ENCODE measurements at regions of chr7 and their contacts with region 1.

Region 1: DNA sequence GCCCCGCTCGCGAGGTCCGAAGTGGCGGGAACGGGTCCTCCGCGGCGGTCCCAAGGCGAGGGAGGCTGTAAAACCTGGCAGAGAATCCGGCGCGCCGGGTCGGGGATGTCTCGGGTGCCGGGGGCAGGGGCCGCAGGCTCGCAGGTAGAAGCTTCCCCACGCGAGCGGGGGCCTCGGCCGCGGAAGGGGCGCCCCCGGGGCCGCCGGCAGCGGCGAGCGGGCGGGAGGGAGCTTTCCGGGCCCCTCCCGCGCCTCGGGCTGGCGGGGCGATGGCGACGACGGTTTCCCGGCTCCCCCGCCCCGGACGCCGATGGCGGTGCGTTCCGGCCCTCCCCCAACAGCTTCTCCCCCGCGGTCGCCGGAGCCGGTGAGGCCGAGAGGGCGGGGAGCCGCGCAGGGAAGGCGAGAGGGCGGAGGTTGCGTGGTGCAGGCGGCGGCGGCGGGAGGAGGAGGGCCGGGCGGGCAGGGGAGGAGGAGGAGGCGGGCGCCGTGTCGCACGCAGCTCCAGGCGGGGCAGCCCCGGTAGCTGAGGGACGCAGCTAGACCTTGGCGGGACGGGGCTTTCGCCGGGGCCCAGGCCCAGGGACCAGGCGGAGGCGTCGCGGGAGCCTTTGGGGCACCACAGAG is at the start of gene CUL1:
- DNase-seq: no peak
- ATAC-seq: peak; percentile 82
- H3K4me3 ChIP-seq: peak within 1 kb of the TSS; percentile 94
- H3K27ac ChIP-seq: peak within 1 kb of the TSS; percentile 79
- H3K4me1 ChIP-seq: peaks cover 9% of the 10 kb centered on the region
- H3K27me3 ChIP-seq: no peaks in the 10 kb centered on the region
- CTCF ChIP-seq: no peak
- EP300 ChIP-seq: no peak
- POLR2A ChIP-seq: peak; percentile 83
- RAD21 ChIP-seq: no peak
- polyA plus RNA-seq, gene CUL1: 13.3 to 21.4 TPM

Region 2: GRCh38 chr7:148712678-148713329 is 14.3 kb after region 1 on chr7:
- CTCF ChIA-PET with region 1: interaction called, 11 read pairs
- POLR2A ChIA-PET with region 1: interaction called, 14 read pairs
- RAD21 ChIA-PET with region 1: interaction called, 4 read pairs
- SMC1A ChIA-PET with region 1: interaction called, 16 read pairs
- in situ Hi-C with region 1: no loop called
- intact Hi-C with region 1: no loop called
- DNase-seq: no peak
- ATAC-seq: peak; percentile 79
- H3K4me3 ChIP-seq: peak overlapping the region; percentile 33; the same call in 1 of the 2 replicates
- H3K27ac ChIP-seq: peak overlapping the region; percentile 14; the same call in 1 of the 2 replicates
- H3K4me1 ChIP-seq: peaks cover 26% of the 10 kb centered on the region
- H3K27me3 ChIP-seq: no peaks in the 10 kb centered on the region
- CTCF ChIP-seq: no peak
- EP300 ChIP-seq: no peak
- POLR2A ChIP-seq: no peak
- RAD21 ChIP-seq: no peak

Region 3: GRCh38 chr7:148722340-148723165 is 24.0 kb after region 1 on chr7:
- CTCF ChIA-PET with region 1: interaction called, 3 read pairs
- POLR2A ChIA-PET with region 1: interaction called, 3 read pairs
- RAD21 ChIA-PET with region 1: no interaction called
- SMC1A ChIA-PET with region 1: interaction called, 18 read pairs
- in situ Hi-C with region 1: no loop called
- intact Hi-C with region 1: no loop called
- DNase-seq: no peak
- ATAC-seq: peak; percentile 10; the same call in 1 of the 3 replicates
- H3K4me3 ChIP-seq: no peak overlapping the region
- H3K27ac ChIP-seq: no peak overlapping the region
- H3K4me1 ChIP-seq: peaks cover 9% of the 10 kb centered on the region
- H3K27me3 ChIP-seq: no peaks in the 10 kb centered on the region
- CTCF ChIP-seq: no peak
- EP300 ChIP-seq: no peak
- POLR2A ChIP-seq: no peak
- RAD21 ChIP-seq: no peak